CD14-positive monocyte (primary cell): ENCODE measurements at regions of chr19 and their contacts with region 1.

Region 1: GRCh38 chr19:39397360-39398296 is 6.5 kb downstream of the MED29 start:
- DNase-seq: peak; percentile 94 to 96 (median 95)
- H3K4me3 ChIP-seq: peak overlapping the region; percentile 35 to 63 (median 51)
- H3K4me3 Mint-ChIP-seq: peak overlapping the region; percentile 89 to 93
- H3K27ac ChIP-seq: peak overlapping the region; percentile 97 to 99
- H3K27ac Mint-ChIP-seq: peak overlapping the region; percentile 100
- H3K4me1 ChIP-seq: peaks cover 54 to 57% of the 10 kb centered on the region in 2 donors
- H3K4me1 Mint-ChIP-seq: peaks cover 49% of the 10 kb centered on the region
- H3K27me3 ChIP-seq: no peaks in the 10 kb centered on the region
- H3K27me3 Mint-ChIP-seq: peaks cover 0 to 5% (median 0%) of the 10 kb centered on the region in 3 donors
- CTCF ChIP-seq: peak; percentile 94

Region 2: DNA sequence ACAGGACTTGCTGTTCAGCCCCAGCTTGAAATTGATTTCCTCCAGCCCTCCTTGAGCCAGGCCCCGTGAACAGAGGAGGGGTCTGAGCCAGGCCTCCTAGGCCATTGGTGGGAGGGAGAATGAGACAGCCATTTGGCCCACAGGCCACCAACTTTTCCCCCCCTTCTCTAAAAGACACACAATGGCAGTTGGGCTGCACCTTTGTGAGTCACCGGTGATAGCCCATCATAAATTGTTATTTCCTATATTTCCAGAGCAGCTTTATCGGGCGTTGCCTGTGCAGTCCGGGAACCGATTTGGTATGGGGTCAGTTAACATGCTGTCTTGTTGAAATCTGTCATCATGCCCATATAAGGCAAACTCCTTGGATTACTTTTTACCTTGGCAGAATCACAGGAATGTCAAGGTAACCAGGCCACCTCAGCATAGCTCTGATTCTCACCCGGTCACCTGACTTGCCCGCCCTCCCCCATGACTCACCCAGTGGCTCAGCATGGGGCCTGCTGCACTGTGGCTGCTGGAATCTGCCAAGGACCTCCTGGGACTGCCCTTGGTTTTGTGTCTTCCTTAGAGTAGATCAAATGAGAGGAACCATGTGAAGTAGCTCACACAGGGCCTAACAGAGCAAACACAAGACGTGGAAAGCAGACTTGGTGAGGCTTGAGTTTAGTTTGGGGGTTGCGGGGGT is 714.1 kb before region 1 on chr19:
- intact Hi-C with region 1: loop called in 1 of 2 experiments (anchors 5 kb)
- DNase-seq: peak; percentile 77 to 92 (median 80)
- H3K4me3 ChIP-seq: peak overlapping the region in 1 of 3 experiments; percentile 2
- H3K4me3 Mint-ChIP-seq: peak overlapping the region; percentile 34 to 67
- H3K27ac ChIP-seq: peak overlapping the region; percentile 96 to 98
- H3K27ac Mint-ChIP-seq: peak overlapping the region; percentile 95 to 99 (median 97)
- H3K4me1 ChIP-seq: peaks cover 90 to 100% of the 10 kb centered on the region in 2 donors
- H3K4me1 Mint-ChIP-seq: peaks cover 98% of the 10 kb centered on the region
- H3K27me3 ChIP-seq: no peaks in the 10 kb centered on the region
- H3K27me3 Mint-ChIP-seq: no peaks in the 10 kb centered on the region
- CTCF ChIP-seq: no peak

Region 3: DNA sequence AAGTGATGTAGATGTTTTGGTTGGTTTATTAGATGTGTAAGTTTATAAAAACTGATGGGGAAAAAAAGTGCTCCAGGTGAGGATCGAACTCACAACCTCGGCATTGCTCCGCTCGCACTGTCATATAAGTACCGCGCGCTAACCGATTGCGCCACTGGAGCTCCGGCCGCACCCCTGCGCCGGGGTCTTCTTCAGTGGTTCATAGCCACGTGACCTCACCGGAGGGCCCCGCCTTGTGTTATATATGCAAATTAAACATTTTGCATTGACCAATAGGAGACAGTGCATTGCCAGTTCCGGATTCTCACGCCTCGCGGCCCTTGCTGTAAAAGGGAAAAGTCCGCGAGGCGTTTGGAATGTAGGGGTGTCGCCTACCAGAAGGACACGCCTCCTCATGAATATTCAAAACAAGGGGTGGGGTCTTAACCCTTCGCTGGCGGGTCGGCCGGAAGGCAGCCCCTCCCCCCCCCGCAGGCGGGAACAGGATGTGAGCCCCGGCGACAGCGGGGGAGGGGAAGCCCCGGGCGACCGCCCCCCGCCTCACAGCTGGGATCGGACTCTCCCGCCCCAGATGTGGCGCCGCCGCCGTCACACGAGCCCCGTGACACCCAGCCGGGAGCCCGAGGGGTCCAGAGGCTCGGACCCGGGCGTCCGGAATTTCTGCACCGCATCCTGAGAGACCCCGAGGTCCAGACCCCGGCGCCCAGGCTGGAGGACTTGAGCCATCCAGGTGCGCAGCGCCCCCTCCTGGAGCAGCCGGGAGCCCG is 14.7 kb after region 1 on chr19 and contains the start of gene PLEKHG2:
- intact Hi-C with region 1: loop called in 1 of 2 experiments (anchors 1 kb)
- DNase-seq: peak; percentile 99
- H3K4me3 ChIP-seq: peak within 1 kb of the TSS; percentile 89 to 96 (median 91)
- H3K4me3 Mint-ChIP-seq: peak within 1 kb of the TSS; percentile 91 to 99
- H3K27ac ChIP-seq: peak within 1 kb of the TSS; percentile 98 to 99
- H3K27ac Mint-ChIP-seq: peak within 1 kb of the TSS; percentile 96 to 100 (median 98)
- H3K4me1 ChIP-seq: peaks cover 27 to 31% of the 10 kb centered on the region in 2 donors
- H3K4me1 Mint-ChIP-seq: peaks cover 26% of the 10 kb centered on the region
- H3K27me3 ChIP-seq: no peaks in the 10 kb centered on the region
- H3K27me3 Mint-ChIP-seq: peaks cover 2 to 36% (median 10%) of the 10 kb centered on the region in 3 donors
- CTCF ChIP-seq: peak; percentile 79
- polyA plus RNA-seq, gene PLEKHG2: 0.73 to 202 (median 1.2) TPM

Region 4: DNA sequence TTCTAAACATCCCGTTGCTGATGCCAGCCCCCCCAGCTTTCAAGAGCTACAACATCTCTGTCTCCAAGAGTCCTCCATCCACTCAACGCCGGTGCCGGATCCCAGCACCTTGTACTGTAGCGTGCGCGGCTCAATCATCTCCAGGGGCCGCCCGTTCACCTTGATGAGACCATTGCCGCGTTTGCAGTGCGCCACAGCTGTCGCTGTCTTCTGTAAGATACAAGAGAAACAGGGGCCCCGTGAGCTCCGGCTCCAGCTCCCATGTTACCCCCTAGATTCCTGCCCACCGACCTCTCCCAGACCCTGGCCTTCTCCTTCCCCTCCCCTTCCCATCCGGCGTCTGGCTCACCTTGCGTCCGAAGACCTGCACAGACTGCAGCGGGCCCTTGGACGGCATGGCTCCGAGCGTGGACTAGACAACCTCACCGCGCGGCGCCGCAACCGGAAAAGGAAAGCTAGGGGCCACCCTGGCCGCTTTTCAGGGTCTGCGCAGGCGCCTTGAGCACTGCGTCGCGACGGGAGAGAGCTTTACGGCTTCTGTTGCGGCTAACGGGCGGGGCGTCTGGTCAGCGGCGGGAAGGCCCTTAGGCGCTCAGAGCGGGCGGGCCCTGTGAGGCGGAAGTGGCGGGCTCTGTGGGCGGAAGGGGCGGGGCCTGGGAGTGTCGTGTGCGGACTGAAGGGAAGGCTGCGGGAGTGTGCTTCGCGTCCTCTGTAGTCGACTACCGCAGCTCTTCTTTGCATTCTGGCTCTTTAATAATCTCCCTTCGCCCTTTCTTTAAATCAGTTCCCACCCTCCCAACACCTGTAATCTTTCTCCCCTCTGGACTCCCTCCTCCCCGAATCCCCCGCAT is 38.1 kb after region 1 on chr19 and contains the start of gene RPS16:
- intact Hi-C with region 1: loop called in 1 of 2 experiments (anchors 2 kb)
- DNase-seq: peak; percentile 98 to 99 (median 98)
- H3K4me3 ChIP-seq: peak within 1 kb of the TSS; percentile 54 to 96 (median 95)
- H3K4me3 Mint-ChIP-seq: peak within 1 kb of the TSS; percentile 99
- H3K27ac ChIP-seq: peak within 1 kb of the TSS; percentile 82 to 89
- H3K27ac Mint-ChIP-seq: peak within 1 kb of the TSS; percentile 94 to 99 (median 97)
- H3K4me1 ChIP-seq: peaks cover 32 to 38% of the 10 kb centered on the region in 2 donors
- H3K4me1 Mint-ChIP-seq: peaks cover 40% of the 10 kb centered on the region
- H3K27me3 ChIP-seq: peaks cover 0 to 2% of the 10 kb centered on the region in 2 donors
- H3K27me3 Mint-ChIP-seq: peaks cover 6 to 12% (median 9%) of the 10 kb centered on the region in 3 donors
- CTCF ChIP-seq: no peak
- polyA plus RNA-seq, gene RPS16: 689 to 2,619 (median 1,038) TPM